Heart left ventricle (tissue), 16 donors: ENCODE measurements at regions of chr7 and their contacts with region 1.

Region 1: DNA sequence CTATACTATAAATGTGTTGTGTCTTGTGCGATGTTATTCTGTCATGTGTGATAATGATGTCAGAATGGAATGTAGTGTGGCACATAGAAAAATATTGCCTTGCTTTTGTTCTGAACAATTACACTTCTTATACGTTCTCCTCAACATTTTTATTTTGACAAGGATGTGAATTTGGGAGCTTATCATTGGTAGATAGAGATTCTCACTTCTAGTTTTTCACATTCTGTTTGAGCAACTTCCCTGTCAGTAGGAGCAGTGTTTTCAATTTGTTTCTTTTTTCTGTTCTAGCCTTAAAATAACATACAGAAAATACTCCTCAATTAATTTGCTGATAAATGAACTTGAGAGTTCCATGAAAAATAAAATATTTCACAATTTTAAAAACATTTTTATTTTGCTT is 17.6 kb downstream of the SUN3 start:
- DNase-seq: no peak
- ATAC-seq: no peak
- H3K4me3 ChIP-seq: no peak overlapping the region
- H3K27ac ChIP-seq: no peak overlapping the region
- H3K4me1 ChIP-seq: no peaks in the 10 kb centered on the region
- H3K27me3 ChIP-seq: peaks cover 0 to 4% (median 0%) of the 10 kb centered on the region in 9 donors
- CTCF ChIP-seq: no peak
- POLR2A ChIP-seq: no peak

Region 2: GRCh38 chr7:47914717-47915615 is 96.4 kb before region 1 on chr7:
- intact Hi-C with region 1: no loop called
- DNase-seq: no peak
- ATAC-seq: no peak
- H3K4me3 ChIP-seq: no peak overlapping the region
- H3K27ac ChIP-seq: no peak overlapping the region
- H3K4me1 ChIP-seq: no peaks in the 10 kb centered on the region
- H3K27me3 ChIP-seq: no peaks in the 10 kb centered on the region
- CTCF ChIP-seq: no peak
- POLR2A ChIP-seq: no peak

Region 3: GRCh38 chr7:48041653-48041970 is 30.3 kb after region 1 on chr7:
- intact Hi-C with region 1: no loop called
- DNase-seq: no peak
- ATAC-seq: no peak
- H3K4me3 ChIP-seq: no peak overlapping the region
- H3K27ac ChIP-seq: no peak overlapping the region
- H3K4me1 ChIP-seq: no peaks in the 10 kb centered on the region
- H3K27me3 ChIP-seq: peaks cover 0 to 8% (median 0%) of the 10 kb centered on the region in 9 donors
- CTCF ChIP-seq: no peak
- POLR2A ChIP-seq: no peak

Region 4: GRCh38 chr7:48059706-48060105 is 48.4 kb after region 1 on chr7:
- intact Hi-C with region 1: loop called in 1 of 10 experiments (anchors 10 kb)
- DNase-seq: no peak
- ATAC-seq: no peak
- H3K4me3 ChIP-seq: no peak overlapping the region
- H3K27ac ChIP-seq: no peak overlapping the region
- H3K4me1 ChIP-seq: peaks cover 0 to 3% (median 0%) of the 10 kb centered on the region in 12 donors
- H3K27me3 ChIP-seq: no peaks in the 10 kb centered on the region
- CTCF ChIP-seq: no peak
- POLR2A ChIP-seq: no peak

Region 5: DNA sequence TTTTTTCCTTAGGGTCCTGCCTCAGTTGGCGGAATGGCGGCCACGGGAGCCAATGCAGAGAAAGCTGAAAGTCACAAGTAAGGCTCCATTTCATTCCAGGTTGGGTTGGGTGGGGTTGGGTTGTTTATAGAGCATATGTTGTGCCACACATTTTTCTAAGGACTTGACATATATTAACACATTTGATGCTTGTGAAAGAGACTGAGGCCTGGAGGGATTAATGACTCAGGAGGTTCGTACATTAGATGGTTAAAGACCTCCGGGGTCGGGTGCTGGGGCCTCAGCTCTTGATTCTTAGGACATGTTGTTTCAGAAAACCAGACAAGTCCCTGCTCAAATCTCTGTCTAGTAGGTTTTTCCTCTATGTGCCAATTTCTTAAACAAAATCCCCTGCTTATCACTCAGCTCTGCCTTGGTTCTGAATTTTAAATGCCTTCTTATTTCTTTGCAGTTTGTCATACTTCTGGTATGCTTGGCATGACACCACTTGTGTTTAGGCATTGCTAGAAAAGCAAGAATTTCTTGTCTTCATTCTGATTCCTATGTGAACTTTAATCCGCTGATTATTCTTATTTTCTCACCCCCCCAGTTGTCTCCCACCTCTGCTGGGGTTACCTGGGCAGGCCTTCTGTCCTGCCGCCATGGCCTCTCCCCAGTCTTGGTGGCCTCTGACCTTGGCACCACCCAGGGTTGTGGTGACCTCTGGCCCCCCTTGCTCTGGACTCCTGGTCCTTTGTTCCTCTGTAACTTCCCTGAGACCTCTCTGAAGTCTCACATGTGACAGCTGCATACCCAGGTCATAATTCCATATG is 83.6 kb after region 1 on chr7:
- intact Hi-C with region 1: no loop called
- DNase-seq: no peak
- ATAC-seq: no peak
- H3K4me3 ChIP-seq: no peak overlapping the region
- H3K27ac ChIP-seq: peak overlapping the region in 1 of 12 donors; percentile 93
- H3K4me1 ChIP-seq: peaks cover 0 to 80% (median 4%) of the 10 kb centered on the region in 12 donors
- H3K27me3 ChIP-seq: no peaks in the 10 kb centered on the region
- CTCF ChIP-seq: no peak
- POLR2A ChIP-seq: no peak